Heart left ventricle (tissue), 16 donors: ENCODE measurements at regions of chr4 and their contacts with region 1.

Region 1: GRCh38 chr4:16289897-16290554 is 63.8 kb upstream of the TAPT1 start:
- DNase-seq: no peak
- ATAC-seq: peak in 1 of 4 donors; percentile 26
- H3K4me3 ChIP-seq: no peak overlapping the region
- H3K27ac ChIP-seq: no peak overlapping the region
- H3K4me1 ChIP-seq: peaks cover 0 to 6% (median 0%) of the 10 kb centered on the region in 12 donors
- H3K27me3 ChIP-seq: peaks cover 0 to 35% (median 0%) of the 10 kb centered on the region in 9 donors
- CTCF ChIP-seq: peak; percentile 59 to 86 (median 70)
- POLR2A ChIP-seq: no peak

Region 2: GRCh38 chr4:16250665-16251365 is 39.2 kb before region 1 on chr4:
- intact Hi-C with region 1: no loop called
- DNase-seq: no peak
- ATAC-seq: no peak
- H3K4me3 ChIP-seq: no peak overlapping the region
- H3K27ac ChIP-seq: no peak overlapping the region
- H3K4me1 ChIP-seq: no peaks in the 10 kb centered on the region
- H3K27me3 ChIP-seq: no peaks in the 10 kb centered on the region
- CTCF ChIP-seq: no peak
- POLR2A ChIP-seq: no peak

Region 3: GRCh38 chr4:16418814-16419213 is 128.8 kb after region 1 on chr4:
- intact Hi-C with region 1: no loop called
- DNase-seq: peak in 1 of 5 donors; percentile 19
- ATAC-seq: peak in 2 of 4 donors; percentile 54 to 87
- H3K4me3 ChIP-seq: no peak overlapping the region
- H3K27ac ChIP-seq: no peak overlapping the region
- H3K4me1 ChIP-seq: peaks cover 0 to 9% (median 0%) of the 10 kb centered on the region in 12 donors
- H3K27me3 ChIP-seq: no peaks in the 10 kb centered on the region
- CTCF ChIP-seq: no peak
- POLR2A ChIP-seq: no peak

Region 4: GRCh38 chr4:16443504-16444088 is 153.6 kb after region 1 on chr4:
- intact Hi-C with region 1: loop called (anchors 1 to 5 kb)
- DNase-seq: no peak
- ATAC-seq: no peak
- H3K4me3 ChIP-seq: no peak overlapping the region
- H3K27ac ChIP-seq: no peak overlapping the region
- H3K4me1 ChIP-seq: peaks cover 0 to 10% (median 0%) of the 10 kb centered on the region in 12 donors
- H3K27me3 ChIP-seq: no peaks in the 10 kb centered on the region
- CTCF ChIP-seq: peak; percentile 43 to 78 (median 64)
- POLR2A ChIP-seq: no peak

Region 5: GRCh38 chr4:16450724-16451123 is 160.7 kb after region 1 on chr4:
- intact Hi-C with region 1: loop called in 1 of 10 experiments (anchors 5 kb)
- DNase-seq: no peak
- ATAC-seq: no peak
- H3K4me3 ChIP-seq: no peak overlapping the region
- H3K27ac ChIP-seq: no peak overlapping the region
- H3K4me1 ChIP-seq: no peaks in the 10 kb centered on the region
- H3K27me3 ChIP-seq: no peaks in the 10 kb centered on the region
- CTCF ChIP-seq: peak in 9 of 12 donors; percentile 12 to 41 (median 32)
- POLR2A ChIP-seq: no peak

Region 6: GRCh38 chr4:16480011-16480410 is 190.0 kb after region 1 on chr4:
- intact Hi-C with region 1: no loop called
- DNase-seq: no peak
- ATAC-seq: no peak
- H3K4me3 ChIP-seq: no peak overlapping the region
- H3K27ac ChIP-seq: no peak overlapping the region
- H3K4me1 ChIP-seq: peaks cover 0 to 8% (median 0%) of the 10 kb centered on the region in 12 donors
- H3K27me3 ChIP-seq: no peaks in the 10 kb centered on the region
- CTCF ChIP-seq: no peak
- POLR2A ChIP-seq: no peak

Region 7: GRCh38 chr4:17447675-17448298 is 1157.8 kb after region 1 on chr4:
- intact Hi-C with region 1: loop called in 8 of 10 experiments (anchors 1 to 5 kb)
- DNase-seq: peak in 2 of 5 donors; percentile 42 to 51
- ATAC-seq: peak; percentile 58 to 91 (median 87)
- H3K4me3 ChIP-seq: no peak overlapping the region
- H3K27ac ChIP-seq: no peak overlapping the region
- H3K4me1 ChIP-seq: peaks cover 0 to 2% (median 0%) of the 10 kb centered on the region in 12 donors
- H3K27me3 ChIP-seq: no peaks in the 10 kb centered on the region
- CTCF ChIP-seq: peak; percentile 48 to 80 (median 64)
- POLR2A ChIP-seq: no peak

Region 8: GRCh38 chr4:17468371-17469221 is 1178.6 kb after region 1 on chr4:
- intact Hi-C with region 1: loop called in 4 of 10 experiments (anchors 2 to 10 kb)
- DNase-seq: peak in 1 of 5 donors; percentile 27
- ATAC-seq: no peak
- H3K4me3 ChIP-seq: no peak overlapping the region
- H3K27ac ChIP-seq: no peak overlapping the region
- H3K4me1 ChIP-seq: peaks cover 0 to 6% (median 0%) of the 10 kb centered on the region in 12 donors
- H3K27me3 ChIP-seq: no peaks in the 10 kb centered on the region
- CTCF ChIP-seq: peak; percentile 33 to 70 (median 54)
- POLR2A ChIP-seq: no peak